Spleen (tissue), 13 donors: ENCODE measurements at regions of chr22 and their contacts with region 1.

Region 1: DNA sequence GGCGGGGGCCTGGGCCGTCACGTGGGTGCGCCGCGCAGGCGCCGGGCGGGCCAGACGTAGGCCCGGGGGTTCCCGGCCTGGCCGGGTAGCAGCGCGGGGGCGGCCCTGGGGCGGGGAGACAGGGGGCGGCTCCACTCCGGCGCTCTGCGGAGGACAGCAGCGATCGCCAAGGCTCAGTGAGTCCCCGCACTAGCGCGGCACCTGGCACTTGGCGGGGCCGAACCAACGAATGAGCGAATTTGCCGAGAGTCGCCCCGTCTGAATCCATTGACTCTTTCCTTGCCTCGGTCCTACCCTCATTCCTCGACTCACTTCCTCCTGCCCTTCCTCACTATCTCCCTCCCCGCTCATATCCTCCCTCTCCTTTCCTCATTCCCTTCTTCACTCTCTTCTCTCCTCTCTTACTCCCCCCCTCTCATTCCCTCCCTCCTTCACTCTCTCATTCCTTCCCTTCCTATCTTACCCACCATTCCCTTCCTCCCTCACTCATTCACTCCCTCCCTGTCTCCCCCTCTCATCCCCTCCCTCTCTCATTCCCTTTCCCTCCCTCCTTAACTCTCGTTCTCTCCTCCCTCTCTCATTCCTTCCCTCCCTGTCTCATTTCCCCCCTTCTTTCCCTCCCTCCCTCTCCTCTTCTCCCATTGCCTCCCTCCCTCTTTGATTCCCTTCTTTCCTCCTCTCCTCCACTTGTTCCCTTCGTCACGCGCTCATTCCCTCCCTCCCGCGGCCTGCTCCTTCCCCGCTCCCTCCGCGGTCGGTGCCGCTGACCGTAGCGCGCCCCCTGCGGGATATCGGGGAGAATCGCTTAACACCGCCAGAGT is 476 bp upstream of the KLHL22 start:
- DNase-seq: peak; percentile 99
- H3K4me3 ChIP-seq: peak overlapping the region; percentile 60 to 92 (median 75)
- H3K27ac ChIP-seq: peak overlapping the region; percentile 90 to 96 (median 92)
- H3K4me1 ChIP-seq: peaks cover 13 to 52% (median 30%) of the 10 kb centered on the region in 6 donors
- H3K27me3 ChIP-seq: no peaks in the 10 kb centered on the region
- CTCF ChIP-seq: peak; percentile 82 to 95 (median 89)
- POLR2A ChIP-seq: no peak

Region 2: GRCh38 chr22:20418211-20418788 is 77.8 kb before region 1 on chr22:
- intact Hi-C with region 1: loop called (anchors 2 kb)
- DNase-seq: peak; percentile 94
- H3K4me3 ChIP-seq: peak overlapping the region; percentile 11 to 63 (median 32)
- H3K27ac ChIP-seq: peak overlapping the region in 5 of 8 donors; percentile 23 to 61 (median 44)
- H3K4me1 ChIP-seq: peaks cover 3 to 18% (median 9%) of the 10 kb centered on the region in 6 donors
- H3K27me3 ChIP-seq: peaks cover 0 to 8% (median 0%) of the 10 kb centered on the region in 7 donors
- CTCF ChIP-seq: peak; percentile 41 to 99 (median 75)
- POLR2A ChIP-seq: no peak

Region 3: DNA sequence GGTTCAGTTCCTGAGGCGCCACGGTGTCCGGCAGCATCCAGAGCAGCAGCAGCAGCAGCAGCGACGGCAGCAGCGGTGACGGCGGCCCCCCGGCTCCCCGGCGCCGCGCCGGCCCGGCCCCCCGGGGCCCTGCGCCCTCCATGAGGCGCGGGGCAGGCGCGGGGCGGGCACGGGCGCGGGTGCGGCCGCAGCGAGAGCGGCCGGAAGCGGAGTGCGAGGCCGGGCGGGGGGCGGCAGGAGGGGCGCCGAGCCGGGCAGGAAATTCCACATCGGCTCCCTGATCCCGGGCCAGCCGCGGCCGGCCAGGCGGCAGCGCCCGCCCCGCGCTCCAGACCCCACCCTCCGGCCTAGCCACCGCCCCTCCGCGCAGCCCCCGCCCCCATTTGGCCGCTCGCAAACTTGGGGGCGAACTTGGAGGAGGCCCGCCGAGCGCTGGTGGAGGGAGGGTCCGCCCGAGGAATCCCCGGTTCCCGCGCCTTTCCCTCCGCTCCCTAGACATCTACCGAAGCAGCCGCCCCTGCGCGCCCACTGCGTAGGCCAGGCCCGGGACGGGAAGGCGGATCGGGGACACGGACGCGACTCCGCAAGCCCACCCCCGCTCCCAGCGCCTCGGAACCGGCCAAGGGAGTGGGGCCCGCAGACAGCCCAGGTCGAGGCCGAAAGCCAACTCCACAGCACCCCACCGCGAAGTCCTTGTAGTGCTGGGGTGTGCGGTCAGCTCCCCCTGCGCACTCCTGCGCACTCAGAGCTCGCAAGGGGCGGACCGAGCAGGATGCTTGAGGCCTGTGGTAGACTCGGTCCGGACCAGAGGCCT is 58.3 kb before region 1 on chr22 and contains the start of gene SCARF2:
- intact Hi-C with region 1: no loop called
- DNase-seq: peak; percentile 75
- H3K4me3 ChIP-seq: peak within 1 kb of the TSS; percentile 29 to 71 (median 47)
- H3K27ac ChIP-seq: peak within 1 kb of the TSS; percentile 48 to 85 (median 80)
- H3K4me1 ChIP-seq: peaks cover 0 to 80% (median 40%) of the 10 kb centered on the region in 6 donors
- H3K27me3 ChIP-seq: peaks cover 0 to 62% (median 32%) of the 10 kb centered on the region in 7 donors
- CTCF ChIP-seq: no peak
- POLR2A ChIP-seq: no peak
- total RNA-seq, gene SCARF2: 7.1 to 18.0 (median 10.6) TPM

Region 4: GRCh38 chr22:20456064-20456721 is 39.9 kb before region 1 on chr22:
- intact Hi-C with region 1: loop called (anchors 5 kb)
- DNase-seq: peak; percentile 92
- H3K4me3 ChIP-seq: no peak overlapping the region
- H3K27ac ChIP-seq: no peak overlapping the region
- H3K4me1 ChIP-seq: peaks cover 8 to 42% (median 17%) of the 10 kb centered on the region in 6 donors
- H3K27me3 ChIP-seq: no peaks in the 10 kb centered on the region
- CTCF ChIP-seq: peak; percentile 86 to 97 (median 93)
- POLR2A ChIP-seq: no peak

Region 5: DNA sequence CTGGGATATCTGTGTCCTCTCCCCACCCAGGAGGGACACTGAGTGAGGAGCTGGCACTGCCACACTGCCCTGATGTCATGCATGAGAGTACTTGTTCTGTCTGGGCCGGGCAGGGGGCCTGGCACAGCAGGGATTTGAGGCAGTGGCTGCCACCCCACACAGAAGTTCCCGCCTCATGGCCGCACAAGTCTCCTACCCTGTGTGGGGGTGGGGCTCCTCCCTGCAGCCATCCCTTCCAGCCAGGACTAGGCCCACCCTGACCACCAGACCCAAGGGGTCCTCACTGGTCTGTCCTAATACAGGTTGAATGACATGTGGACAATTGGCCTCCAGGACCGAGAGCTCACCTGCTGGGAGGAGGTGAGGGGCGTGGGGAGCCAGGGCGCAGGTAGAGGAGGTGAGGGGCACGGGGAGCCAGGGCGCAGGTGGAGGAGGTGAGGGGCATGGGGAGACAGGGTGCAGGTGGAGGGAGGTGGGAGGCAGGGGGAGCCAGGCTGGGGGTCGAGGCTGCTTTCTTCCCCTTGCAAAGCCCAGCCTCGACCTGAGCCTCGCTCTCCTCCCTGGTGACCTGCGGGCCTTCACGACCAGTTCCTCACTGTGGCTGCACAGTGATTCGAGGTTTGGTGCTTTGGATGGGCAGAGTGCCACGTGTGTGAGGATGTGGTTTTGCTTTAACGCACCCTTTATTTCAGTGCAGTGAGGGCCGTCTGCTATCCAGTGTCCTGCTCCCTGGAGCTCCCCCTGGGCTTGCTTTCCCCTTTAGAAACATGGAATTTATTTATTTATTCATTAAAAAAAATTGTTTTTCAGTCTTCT is 493.5 kb after region 1 on chr22:
- intact Hi-C with region 1: no loop called
- DNase-seq: no peak
- H3K4me3 ChIP-seq: no peak overlapping the region
- H3K27ac ChIP-seq: no peak overlapping the region
- H3K4me1 ChIP-seq: peaks cover 0 to 10% (median 0%) of the 10 kb centered on the region in 6 donors
- H3K27me3 ChIP-seq: no peaks in the 10 kb centered on the region
- CTCF ChIP-seq: no peak
- POLR2A ChIP-seq: no peak